ENCODE measurements at regions of chr1 and their contacts with region 1.

Region 1: GRCh38 chr1:110872745-110873720 is at the start of gene CD53:
- DNase-seq: peak; percentile 78
- ATAC-seq: peak; percentile 65
- H3K4me3 ChIP-seq: peak within 1 kb of the TSS; percentile 88
- H3K27ac ChIP-seq: peak within 1 kb of the TSS; percentile 98
- H3K4me1 ChIP-seq: peaks cover 6% of the 10 kb centered on the region; the same call in 1 of the 2 replicates
- H3K27me3 ChIP-seq: no peaks in the 10 kb centered on the region
- CTCF ChIP-seq: no peak
- EP300 ChIP-seq: peak in 1 of 2 experiments; percentile 63; a peak in 2 of 4 replicates
- POLR2A ChIP-seq: peak; percentile 69
- RAD21 ChIP-seq: no peak
- polyA plus RNA-seq, gene CD53: 698 to 917 TPM

Region 2: DNA sequence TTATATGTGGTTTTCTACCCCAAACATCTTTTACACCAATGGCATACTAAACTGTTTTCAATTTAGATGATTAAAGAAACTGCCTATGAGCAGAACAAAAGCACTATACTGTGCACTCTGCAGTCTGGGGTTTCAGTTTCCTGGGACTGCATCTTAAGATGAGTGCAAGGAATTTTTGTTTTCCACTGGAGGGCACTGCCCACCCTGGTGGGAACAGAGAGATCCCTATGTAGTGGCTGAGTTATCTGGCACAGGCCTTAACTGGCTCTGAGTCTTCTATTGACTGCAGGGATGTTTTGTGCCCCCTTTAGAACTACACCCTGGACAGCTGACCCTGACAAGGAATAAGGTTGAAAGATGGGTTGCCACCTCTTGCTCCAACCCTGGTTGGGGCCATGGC is 410.1 kb before region 1 on chr1:
- CTCF ChIA-PET with region 1: no interaction called
- POLR2A ChIA-PET with region 1: no interaction called
- RAD21 ChIA-PET with region 1: no interaction called
- SMC1A ChIA-PET with region 1: no interaction called
- in situ Hi-C with region 1: no loop called
- intact Hi-C with region 1: no loop called
- DNase-seq: no peak
- ATAC-seq: no peak
- H3K4me3 ChIP-seq: no peak overlapping the region
- H3K27ac ChIP-seq: no peak overlapping the region
- H3K4me1 ChIP-seq: no peaks in the 10 kb centered on the region
- H3K27me3 ChIP-seq: no peaks in the 10 kb centered on the region; a peak in 1 of 4 replicates
- CTCF ChIP-seq: no peak
- EP300 ChIP-seq: no peak
- POLR2A ChIP-seq: no peak
- RAD21 ChIP-seq: no peak

Region 3: GRCh38 chr1:110523011-110523410 is 350.0 kb before region 1 on chr1:
- CTCF ChIA-PET with region 1: no interaction called
- POLR2A ChIA-PET with region 1: no interaction called
- RAD21 ChIA-PET with region 1: no interaction called
- SMC1A ChIA-PET with region 1: no interaction called
- in situ Hi-C with region 1: no loop called
- intact Hi-C with region 1: no loop called
- DNase-seq: no peak
- ATAC-seq: no peak
- H3K4me3 ChIP-seq: no peak overlapping the region
- H3K27ac ChIP-seq: no peak overlapping the region
- H3K4me1 ChIP-seq: no peaks in the 10 kb centered on the region
- H3K27me3 ChIP-seq: peaks cover 0 to 3% of the 10 kb centered on the region in 2 experiments; a peak in 3 of 4 replicates
- CTCF ChIP-seq: no peak
- EP300 ChIP-seq: no peak
- POLR2A ChIP-seq: no peak
- RAD21 ChIP-seq: no peak

Region 4: GRCh38 chr1:110787328-110788071 is 85.5 kb before region 1 on chr1:
- CTCF ChIA-PET with region 1: interaction called, 9 read pairs
- POLR2A ChIA-PET with region 1: no interaction called
- RAD21 ChIA-PET with region 1: interaction called, 3 read pairs
- SMC1A ChIA-PET with region 1: interaction called, 9 read pairs
- in situ Hi-C with region 1: no loop called
- intact Hi-C with region 1: loop called (anchors 5 kb)
- DNase-seq: peak; percentile 76
- ATAC-seq: peak; percentile 83
- H3K4me3 ChIP-seq: no peak overlapping the region
- H3K27ac ChIP-seq: peak overlapping the region; percentile 98
- H3K4me1 ChIP-seq: peaks cover 29% of the 10 kb centered on the region
- H3K27me3 ChIP-seq: no peaks in the 10 kb centered on the region
- CTCF ChIP-seq: no peak
- EP300 ChIP-seq: no peak
- POLR2A ChIP-seq: no peak
- RAD21 ChIP-seq: no peak

Region 5: GRCh38 chr1:110816930-110817329 is 56.1 kb before region 1 on chr1:
- CTCF ChIA-PET with region 1: no interaction called
- POLR2A ChIA-PET with region 1: no interaction called
- RAD21 ChIA-PET with region 1: no interaction called
- SMC1A ChIA-PET with region 1: no interaction called
- in situ Hi-C with region 1: no loop called
- intact Hi-C with region 1: no loop called
- DNase-seq: no peak
- ATAC-seq: no peak
- H3K4me3 ChIP-seq: no peak overlapping the region
- H3K27ac ChIP-seq: no peak overlapping the region
- H3K4me1 ChIP-seq: no peaks in the 10 kb centered on the region
- H3K27me3 ChIP-seq: 0 out of 4 replicates have a peak, but pooled peaks cover 0 to 3% of the 10 kb centered on the region in 2 experiments
- CTCF ChIP-seq: no peak
- EP300 ChIP-seq: no peak
- POLR2A ChIP-seq: no peak
- RAD21 ChIP-seq: no peak

Region 6: DNA sequence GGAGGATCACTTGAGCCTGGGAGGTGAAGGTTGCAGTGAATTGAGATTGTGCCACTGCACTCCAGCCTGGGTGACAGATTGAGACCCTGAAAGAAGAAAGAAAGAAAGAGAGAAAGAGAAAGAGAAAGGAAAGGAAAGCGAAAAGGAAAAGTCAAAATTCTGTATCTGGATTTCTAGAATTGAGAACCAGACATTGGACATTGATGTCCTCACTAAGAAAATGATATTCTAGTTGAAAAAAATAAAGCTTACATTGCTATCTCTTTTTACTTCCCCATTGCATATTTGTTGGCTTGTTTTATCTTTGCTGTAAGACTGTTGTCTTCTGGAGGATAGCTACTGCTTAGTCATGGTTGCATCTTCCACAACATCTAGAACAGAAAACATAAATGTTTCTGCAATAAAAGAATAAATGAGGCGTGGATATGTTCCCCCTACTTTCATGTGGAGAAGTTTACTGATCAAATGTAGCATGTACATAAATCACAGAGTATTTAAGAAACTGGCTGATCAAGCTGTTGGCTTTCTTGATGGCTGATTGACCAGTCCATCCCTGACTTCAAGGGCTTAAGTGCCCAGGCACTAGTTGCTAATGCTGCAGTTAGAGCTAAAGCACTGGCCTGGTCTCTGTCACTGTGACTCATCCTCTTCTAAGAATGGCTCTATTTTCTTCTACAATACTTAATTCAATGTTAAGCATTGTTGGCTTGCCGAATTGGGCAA is 17.6 kb after region 1 on chr1:
- CTCF ChIA-PET with region 1: interaction called, 5 read pairs
- POLR2A ChIA-PET with region 1: interaction called, 5 read pairs
- RAD21 ChIA-PET with region 1: interaction called, 6 read pairs
- SMC1A ChIA-PET with region 1: interaction called, 27 read pairs
- in situ Hi-C with region 1: no loop called
- intact Hi-C with region 1: no loop called
- DNase-seq: no peak
- ATAC-seq: 0 out of 3 replicates have a peak, but pooled peaks have one; percentile 14
- H3K4me3 ChIP-seq: no peak overlapping the region
- H3K27ac ChIP-seq: no peak overlapping the region
- H3K4me1 ChIP-seq: peaks cover 10% of the 10 kb centered on the region
- H3K27me3 ChIP-seq: no peaks in the 10 kb centered on the region
- CTCF ChIP-seq: no peak
- EP300 ChIP-seq: no peak
- POLR2A ChIP-seq: no peak
- RAD21 ChIP-seq: no peak

Region 7: DNA sequence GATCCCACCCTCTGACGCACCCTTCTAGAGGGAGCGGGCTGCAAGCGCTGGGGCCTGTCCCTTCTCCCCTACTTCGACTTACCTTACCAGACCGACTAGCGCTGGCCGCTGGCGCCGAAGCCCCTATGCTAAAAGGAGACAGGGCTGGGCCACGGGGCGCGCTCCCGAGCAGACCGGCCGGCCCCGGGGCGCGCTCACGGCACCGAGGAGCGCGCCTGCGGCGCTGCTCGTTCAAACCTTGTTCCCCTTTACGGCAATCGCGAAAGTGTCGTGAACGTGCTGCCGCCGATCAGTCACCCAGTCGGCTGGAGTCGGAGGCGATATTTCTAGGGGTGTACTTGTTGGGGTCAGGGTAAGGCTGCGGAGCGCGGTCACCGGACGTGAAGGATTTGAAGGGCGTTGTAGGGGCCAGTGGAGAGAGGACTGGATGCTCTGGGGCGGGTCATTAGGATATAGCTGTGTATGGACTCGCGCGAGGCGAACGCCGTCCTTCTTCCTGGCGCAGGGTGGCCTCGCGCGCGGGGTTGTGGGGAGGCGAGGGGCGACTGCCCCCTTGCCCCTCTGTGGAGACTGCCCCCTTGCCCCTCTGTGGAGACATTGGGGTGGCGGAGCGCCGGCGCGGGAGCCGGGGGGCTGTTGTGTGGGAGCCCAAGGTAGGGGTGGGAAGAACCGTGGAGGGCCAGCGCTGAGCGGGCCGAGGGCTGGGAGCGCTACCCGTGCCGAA is 267.1 kb after region 1 on chr1 and contains the starts of genes CEPT1 and DRAM2:
- CTCF ChIA-PET with region 1: no interaction called
- POLR2A ChIA-PET with region 1: interaction called, 5 read pairs
- RAD21 ChIA-PET with region 1: no interaction called
- SMC1A ChIA-PET with region 1: interaction called, 3 read pairs
- in situ Hi-C with region 1: no loop called
- intact Hi-C with region 1: loop called (anchors 10 kb)
- DNase-seq: peak; percentile 76
- ATAC-seq: peak; percentile 73
- H3K4me3 ChIP-seq: peak within 1 kb of the TSS; percentile 95
- H3K27ac ChIP-seq: peak within 1 kb of the TSS; percentile 89
- H3K4me1 ChIP-seq: peaks cover 14% of the 10 kb centered on the region
- H3K27me3 ChIP-seq: no peaks in the 10 kb centered on the region
- CTCF ChIP-seq: no peak
- EP300 ChIP-seq: no peak
- POLR2A ChIP-seq: peak; percentile 90
- RAD21 ChIP-seq: no peak
- polyA plus RNA-seq, gene CEPT1: 29.4 to 55.5 TPM
- polyA plus RNA-seq, gene DRAM2: 88.3 to 146 TPM

Region 8: GRCh38 chr1:111214074-111214801 is 341.2 kb after region 1 on chr1:
- CTCF ChIA-PET with region 1: interaction called, 3 read pairs
- POLR2A ChIA-PET with region 1: interaction called, 4 read pairs
- RAD21 ChIA-PET with region 1: interaction called, 28 read pairs
- SMC1A ChIA-PET with region 1: interaction called, 17 read pairs
- in situ Hi-C with region 1: no loop called
- intact Hi-C with region 1: loop called (anchors 5 kb)
- DNase-seq: peak; percentile 81
- ATAC-seq: peak; percentile 23
- H3K4me3 ChIP-seq: no peak overlapping the region
- H3K27ac ChIP-seq: peak overlapping the region; percentile 100
- H3K4me1 ChIP-seq: peaks cover 62% of the 10 kb centered on the region
- H3K27me3 ChIP-seq: no peaks in the 10 kb centered on the region
- CTCF ChIP-seq: no peak
- EP300 ChIP-seq: no peak
- POLR2A ChIP-seq: no peak
- RAD21 ChIP-seq: 0 out of 2 replicates have a peak, but pooled peaks have one; percentile 1